Sigmoid colon (tissue), 7 donors: ENCODE measurements at regions of chr7 and their contacts with region 1.

Region 1: DNA sequence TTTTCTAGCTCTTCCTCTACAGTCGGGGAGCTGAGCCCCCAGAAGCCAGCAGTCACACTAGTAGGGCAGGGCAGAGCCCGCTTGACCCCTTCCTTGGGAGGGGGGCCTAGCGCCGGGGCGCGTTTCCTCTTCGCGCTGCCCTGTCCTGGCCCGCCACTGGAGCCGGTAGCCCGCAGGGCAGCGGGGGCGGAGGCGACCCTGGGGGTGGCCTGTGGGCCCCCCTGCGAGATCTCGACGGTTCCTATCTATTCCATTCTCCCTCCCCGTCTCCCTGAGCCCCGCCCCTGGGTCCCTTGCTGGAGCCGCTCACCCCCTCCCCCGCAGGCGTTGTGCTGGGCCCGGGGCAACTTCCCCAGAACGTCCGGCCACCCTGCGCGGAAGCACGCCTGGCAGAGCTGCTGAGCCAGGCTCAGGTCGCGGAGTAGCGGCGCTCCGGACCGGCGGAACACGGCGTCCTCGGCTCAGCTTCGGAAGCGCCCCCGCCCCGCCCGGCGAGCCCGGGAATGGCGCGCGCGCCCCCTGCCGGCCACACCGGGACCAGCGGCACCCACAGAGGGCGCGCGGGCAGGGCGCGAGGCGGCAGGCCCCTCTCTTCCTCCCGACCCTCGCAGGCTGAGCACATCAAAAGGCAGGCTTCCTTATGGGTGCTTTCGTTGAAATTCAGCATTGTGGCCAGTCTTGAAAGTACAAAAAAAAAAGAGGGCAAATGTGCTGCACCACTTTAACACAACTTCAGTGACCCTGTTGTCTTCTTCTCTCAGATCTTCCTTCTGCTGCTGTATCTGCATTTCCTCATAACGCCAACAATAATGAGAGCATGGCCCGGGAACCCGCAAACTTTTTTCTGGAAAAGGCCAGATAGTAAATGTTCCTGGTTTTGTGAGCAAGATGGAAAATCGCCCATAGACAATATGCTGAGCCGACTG is 327.6 kb downstream of the TNS3 start:
- DNase-seq: peak; percentile 91
- H3K4me3 ChIP-seq: peak overlapping the region; percentile 33 to 67 (median 60)
- H3K27ac ChIP-seq: peak overlapping the region; percentile 86 to 95 (median 92)
- H3K4me1 ChIP-seq: peaks cover 0 to 50% (median 27%) of the 10 kb centered on the region in 4 donors
- H3K27me3 ChIP-seq: no peaks in the 10 kb centered on the region
- CTCF ChIP-seq: peak in 3 of 4 experiments; percentile 24 to 99 (median 50)
- EP300 ChIP-seq: no peak
- POLR2A ChIP-seq: no peak

Region 2: GRCh38 chr7:46558482-46559193 is 695.7 kb before region 1 on chr7:
- intact Hi-C with region 1: loop called (anchors 10 kb)
- DNase-seq: no peak
- H3K4me3 ChIP-seq: no peak overlapping the region
- H3K27ac ChIP-seq: peak overlapping the region; percentile 23 to 79 (median 79)
- H3K4me1 ChIP-seq: peaks cover 0 to 39% (median 31%) of the 10 kb centered on the region in 4 donors
- H3K27me3 ChIP-seq: no peaks in the 10 kb centered on the region
- CTCF ChIP-seq: no peak
- EP300 ChIP-seq: no peak
- POLR2A ChIP-seq: no peak

Region 3: DNA sequence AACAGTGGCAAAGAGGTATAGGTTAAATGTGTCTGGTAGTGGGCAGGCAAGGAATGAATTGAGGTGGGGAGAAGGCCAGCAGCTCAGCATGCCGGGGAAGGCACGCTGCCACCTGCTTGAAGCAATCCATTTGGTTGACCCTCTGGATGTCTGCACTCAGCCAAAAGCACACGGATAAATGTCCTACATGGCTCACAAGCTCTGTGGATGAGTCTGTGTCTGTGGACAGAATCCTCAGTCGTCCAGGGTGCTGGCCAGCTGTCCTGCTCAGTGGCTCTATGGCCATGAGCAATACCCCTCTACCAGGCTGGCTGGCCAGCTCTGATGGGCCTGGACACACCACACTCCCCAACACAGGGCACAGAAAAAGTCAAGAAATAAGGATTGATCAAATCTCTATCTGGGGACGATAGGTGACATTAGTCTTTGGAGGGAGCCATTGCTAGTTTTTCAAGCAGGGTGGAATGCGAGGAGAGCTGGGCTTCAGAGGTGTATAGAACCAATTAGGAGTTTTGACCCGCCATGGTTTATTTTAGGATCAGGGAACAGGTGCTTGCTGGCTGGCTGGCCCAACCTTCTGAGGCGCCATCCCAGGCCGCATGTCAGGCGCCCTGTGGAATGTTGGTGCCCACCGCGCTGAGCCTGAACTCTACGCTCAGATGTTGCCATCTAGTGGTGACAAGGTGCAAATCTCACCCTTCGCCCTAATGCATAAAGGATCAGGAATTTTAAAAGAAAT is 165.8 kb before region 1 on chr7:
- intact Hi-C with region 1: loop called (anchors 10 kb)
- DNase-seq: peak; percentile 77
- H3K4me3 ChIP-seq: no peak overlapping the region
- H3K27ac ChIP-seq: no peak overlapping the region
- H3K4me1 ChIP-seq: peaks cover 0 to 10% (median 8%) of the 10 kb centered on the region in 4 donors
- H3K27me3 ChIP-seq: no peaks in the 10 kb centered on the region
- CTCF ChIP-seq: peak; percentile 73 to 87 (median 84)
- EP300 ChIP-seq: no peak
- POLR2A ChIP-seq: no peak

Region 4: DNA sequence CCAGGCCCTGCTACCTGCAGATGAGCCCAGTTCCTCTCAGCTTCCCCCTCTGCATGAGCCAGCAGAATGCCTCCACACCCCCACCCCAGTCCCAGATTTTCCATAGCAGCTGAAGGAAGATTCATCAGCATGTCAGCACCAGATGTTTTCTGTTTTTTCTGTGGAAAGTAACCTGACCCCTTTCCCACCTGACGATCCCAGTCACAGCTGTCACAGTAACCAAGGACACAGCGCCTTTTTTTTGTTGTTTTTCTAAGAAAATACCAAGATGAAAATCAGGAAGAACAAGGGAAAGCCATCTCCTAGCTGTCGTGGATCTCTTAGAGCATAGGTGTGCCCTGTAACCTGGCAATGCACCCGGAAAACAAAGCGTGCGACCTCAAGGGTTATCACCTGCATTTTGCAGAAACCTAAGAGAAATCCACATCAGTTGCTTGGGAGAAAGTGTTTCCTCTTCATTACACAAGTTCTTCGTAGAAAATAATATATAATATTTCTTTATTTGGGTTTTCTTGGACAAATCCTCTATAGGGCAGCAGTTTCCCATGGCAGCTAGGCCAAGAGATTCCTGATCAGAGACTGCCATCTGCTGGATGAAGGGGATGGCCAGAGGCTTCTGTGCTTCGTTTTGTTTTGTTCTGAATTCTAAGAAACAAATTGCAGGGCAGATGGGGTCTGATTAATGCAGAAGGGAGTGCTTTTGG is 74.4 kb before region 1 on chr7:
- intact Hi-C with region 1: loop called (anchors 2 kb)
- DNase-seq: no peak
- H3K4me3 ChIP-seq: no peak overlapping the region
- H3K27ac ChIP-seq: peak overlapping the region in 1 of 4 donors; percentile 21
- H3K4me1 ChIP-seq: peaks cover 0 to 54% (median 50%) of the 10 kb centered on the region in 4 donors
- H3K27me3 ChIP-seq: no peaks in the 10 kb centered on the region
- CTCF ChIP-seq: peak; percentile 42 to 83 (median 78)
- EP300 ChIP-seq: no peak
- POLR2A ChIP-seq: no peak

Region 5: DNA sequence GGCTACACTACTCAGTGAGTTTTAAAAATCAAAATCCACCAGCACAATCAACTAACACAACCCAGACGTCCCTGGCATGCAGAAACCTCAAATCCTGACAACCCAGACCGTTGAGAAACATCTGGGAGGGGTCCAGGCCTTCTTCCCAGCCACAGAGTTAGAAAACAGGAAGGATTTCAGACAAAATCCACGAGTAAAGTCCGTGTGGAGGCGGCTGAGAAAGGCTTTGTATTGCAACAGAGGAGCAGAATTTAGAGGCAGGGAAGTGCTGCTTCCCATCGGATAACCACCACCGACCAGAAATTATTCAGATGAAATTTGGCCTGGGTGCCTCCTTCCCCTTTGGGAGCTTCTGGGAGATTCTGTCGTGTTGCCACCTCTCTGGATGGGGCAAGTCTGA is 266.1 kb after region 1 on chr7:
- intact Hi-C with region 1: no loop called
- DNase-seq: peak; percentile 92
- H3K4me3 ChIP-seq: no peak overlapping the region
- H3K27ac ChIP-seq: peak overlapping the region; percentile 57 to 75 (median 70)
- H3K4me1 ChIP-seq: peaks cover 0 to 56% (median 43%) of the 10 kb centered on the region in 4 donors
- H3K27me3 ChIP-seq: no peaks in the 10 kb centered on the region
- CTCF ChIP-seq: no peak
- EP300 ChIP-seq: no peak
- POLR2A ChIP-seq: no peak

Region 6: GRCh38 chr7:47651355-47652317 is 397.3 kb after region 1 on chr7:
- intact Hi-C with region 1: no loop called
- DNase-seq: no peak
- H3K4me3 ChIP-seq: no peak overlapping the region
- H3K27ac ChIP-seq: peak overlapping the region in 1 of 4 donors; percentile 53
- H3K4me1 ChIP-seq: peaks cover 0 to 8% (median 0%) of the 10 kb centered on the region in 4 donors
- H3K27me3 ChIP-seq: no peaks in the 10 kb centered on the region
- CTCF ChIP-seq: no peak
- EP300 ChIP-seq: no peak
- POLR2A ChIP-seq: no peak